PC-3 (cell line): ENCODE measurements at regions of chr10 and their contacts with region 1.

Region 1: GRCh38 chr10:51074238-51075028 is at the start of gene PRKG1:
- DNase-seq: peak; percentile 97
- ATAC-seq: peak; percentile 86
- H3K4me3 ChIP-seq: peak within 1 kb of the TSS; percentile 72
- H3K27ac ChIP-seq: peak within 1 kb of the TSS; percentile 10
- H3K4me1 ChIP-seq: peaks cover 21% of the 10 kb centered on the region
- H3K27me3 ChIP-seq: no peaks in the 10 kb centered on the region
- CTCF ChIP-seq: no peak
- total RNA-seq, gene PRKG1: 6.3 and 7.4 TPM in 2 replicates

Region 2: DNA sequence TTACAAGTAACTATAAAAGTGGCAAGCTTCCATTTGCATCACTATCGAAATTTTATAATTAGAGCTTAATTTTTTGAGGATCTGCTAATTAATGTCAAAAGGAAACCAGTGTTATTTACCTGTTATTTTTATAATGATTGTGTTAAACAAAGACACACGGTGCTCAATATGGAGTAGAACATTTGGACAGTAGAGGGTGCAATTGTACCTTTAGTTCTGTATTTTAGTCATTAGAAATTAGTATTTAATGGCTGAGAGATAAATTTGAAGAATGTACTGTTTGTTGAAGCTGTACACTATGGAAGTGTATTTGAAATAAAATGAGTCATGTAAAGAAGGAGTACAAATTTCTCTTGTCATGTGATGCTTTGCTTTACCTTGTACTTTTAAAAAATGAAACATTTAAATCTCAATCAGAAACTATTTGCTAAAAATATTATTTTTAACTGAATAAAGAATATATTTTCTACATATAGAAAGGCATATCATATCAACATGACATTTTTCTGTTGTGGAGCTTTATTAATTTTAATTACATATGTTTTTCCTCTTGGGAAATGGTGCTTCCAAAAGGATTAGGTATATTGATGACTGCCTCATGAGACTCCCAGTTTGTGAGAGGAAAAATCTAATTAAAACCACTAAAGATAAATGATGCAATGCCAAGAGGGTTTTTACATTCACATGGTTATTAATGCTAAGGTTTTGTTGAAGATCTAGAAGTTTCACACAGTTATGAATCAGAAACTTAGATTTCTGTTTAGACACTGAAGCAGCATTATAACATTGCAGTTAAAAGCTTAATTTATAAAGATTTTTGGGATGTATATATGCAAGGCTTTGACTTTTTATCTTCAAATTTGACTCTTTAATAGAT is 10.5 kb before region 1 on chr10:
- CTCF ChIA-PET with region 1: interaction called, 15 read pairs
- POLR2A ChIA-PET with region 1: interaction called, 5 read pairs
- intact Hi-C with region 1: no loop called
- DNase-seq: peak; percentile 99
- ATAC-seq: peak; percentile 100
- H3K4me3 ChIP-seq: no peak overlapping the region
- H3K27ac ChIP-seq: no peak overlapping the region
- H3K4me1 ChIP-seq: no peaks in the 10 kb centered on the region
- H3K27me3 ChIP-seq: peaks cover 8% of the 10 kb centered on the region
- CTCF ChIP-seq: peak; percentile 100

Region 3: GRCh38 chr10:51103554-51104217 is 29.3 kb after region 1 on chr10:
- CTCF ChIA-PET with region 1: interaction called, 7 read pairs
- POLR2A ChIA-PET with region 1: interaction called, 19 read pairs
- intact Hi-C with region 1: loop called (anchors 1 kb)
- DNase-seq: peak; percentile 99
- ATAC-seq: peak; percentile 99
- H3K4me3 ChIP-seq: peak overlapping the region; percentile 26; the same call in 1 of the 2 replicates
- H3K27ac ChIP-seq: peak overlapping the region; percentile 73
- H3K4me1 ChIP-seq: peaks cover 30% of the 10 kb centered on the region
- H3K27me3 ChIP-seq: no peaks in the 10 kb centered on the region
- CTCF ChIP-seq: no peak

Region 4: DNA sequence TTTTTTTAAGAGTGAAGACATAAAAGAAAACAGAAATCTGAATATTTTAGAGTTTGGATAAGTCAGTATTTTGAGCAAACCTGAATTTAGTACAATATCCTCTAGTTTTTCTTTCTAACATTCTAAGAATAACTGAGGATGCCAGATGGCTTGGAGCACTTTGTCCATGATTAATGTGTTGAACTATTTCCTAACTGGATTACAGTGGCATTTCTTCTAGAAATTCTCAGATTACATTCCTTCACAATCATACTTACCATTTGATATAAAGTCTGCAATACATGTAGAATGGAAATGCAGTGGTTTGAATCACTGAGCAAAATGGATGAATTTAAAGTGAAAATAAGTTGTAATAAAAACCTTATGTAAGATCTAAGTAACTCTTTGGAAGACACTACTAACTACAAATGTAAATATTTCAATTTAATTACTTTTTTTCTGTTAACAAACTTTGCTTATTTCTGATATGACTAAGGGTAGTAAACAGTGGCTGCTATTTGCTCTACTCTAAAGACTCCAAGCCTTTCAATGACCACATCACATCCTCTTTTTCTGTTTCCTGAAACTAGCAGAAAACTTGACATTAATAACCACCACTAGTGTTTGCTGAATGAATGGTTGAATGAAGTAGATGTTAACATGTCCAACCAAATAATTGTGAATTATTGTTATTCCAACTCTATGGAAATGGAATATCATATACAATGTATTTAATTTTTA is 102.7 kb after region 1 on chr10:
- CTCF ChIA-PET with region 1: no interaction called
- POLR2A ChIA-PET with region 1: no interaction called
- intact Hi-C with region 1: loop called (anchors 1 kb)
- DNase-seq: peak; percentile 72
- ATAC-seq: peak; percentile 95
- H3K4me3 ChIP-seq: no peak overlapping the region
- H3K27ac ChIP-seq: peak overlapping the region; percentile 9
- H3K4me1 ChIP-seq: peaks cover 14% of the 10 kb centered on the region
- H3K27me3 ChIP-seq: no peaks in the 10 kb centered on the region
- CTCF ChIP-seq: no peak

Region 5: DNA sequence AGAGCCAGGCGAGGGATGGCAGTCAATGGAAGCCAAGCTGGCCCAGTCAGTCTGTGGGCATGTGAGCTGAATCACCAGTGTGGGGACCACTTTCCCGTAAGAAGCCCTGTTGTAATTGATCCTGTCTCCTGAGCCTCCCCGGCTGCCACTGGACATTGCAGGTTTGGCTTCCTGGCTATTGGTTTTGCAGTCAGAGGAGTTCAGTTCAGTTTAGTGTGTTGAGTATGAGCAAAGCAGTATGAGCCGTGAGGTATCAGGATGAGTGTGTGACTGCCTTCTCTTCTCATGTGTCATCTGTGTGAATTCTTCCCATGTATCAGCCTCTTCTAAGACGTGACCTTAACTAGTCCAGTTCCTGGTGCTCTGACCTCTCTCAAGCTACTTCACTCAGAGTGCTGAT is 227.2 kb after region 1 on chr10:
- CTCF ChIA-PET with region 1: interaction called, 5 read pairs
- POLR2A ChIA-PET with region 1: no interaction called
- intact Hi-C with region 1: loop called (anchors 2 kb)
- DNase-seq: no peak
- ATAC-seq: no peak; the same call in 1 of the 2 replicates
- H3K4me3 ChIP-seq: no peak overlapping the region
- H3K27ac ChIP-seq: no peak overlapping the region
- H3K4me1 ChIP-seq: peaks cover 17% of the 10 kb centered on the region
- H3K27me3 ChIP-seq: no peaks in the 10 kb centered on the region
- CTCF ChIP-seq: no peak

Region 6: DNA sequence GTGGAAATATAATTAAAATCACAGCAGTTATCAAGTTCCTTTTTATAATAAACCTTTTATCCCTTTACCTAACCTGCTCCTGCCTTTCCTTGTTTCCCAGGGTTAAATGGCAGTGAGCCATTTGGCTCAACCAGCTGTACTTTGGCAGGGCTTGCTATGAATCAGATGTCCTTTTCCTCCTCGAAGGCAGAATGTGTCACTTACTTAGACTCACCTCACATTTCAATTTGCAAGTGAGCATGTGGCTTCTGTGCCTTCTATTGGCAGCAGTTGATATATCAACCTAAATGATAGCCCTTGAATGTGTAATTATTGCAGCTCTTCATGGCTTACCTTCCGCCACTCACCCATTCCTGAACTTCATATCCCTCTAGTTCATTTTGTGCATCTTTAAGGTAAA is 323.3 kb after region 1 on chr10:
- CTCF ChIA-PET with region 1: interaction called, 6 read pairs
- POLR2A ChIA-PET with region 1: interaction called, 5 read pairs
- intact Hi-C with region 1: loop called (anchors 1 kb)
- DNase-seq: peak; percentile 100
- ATAC-seq: peak; percentile 99
- H3K4me3 ChIP-seq: no peak overlapping the region
- H3K27ac ChIP-seq: peak overlapping the region; percentile 50
- H3K4me1 ChIP-seq: peaks cover 14% of the 10 kb centered on the region
- H3K27me3 ChIP-seq: no peaks in the 10 kb centered on the region
- CTCF ChIP-seq: peak; percentile 83